Calu3 (cell line): ENCODE measurements at regions of chr17 and their contacts with region 1.

Region 1: GRCh38 chr17:57370037-57370581 is 113.8 kb downstream of the MSI2 start:
- DNase-seq: peak; percentile 17
- H3K4me3 Mint-ChIP-seq: no peak overlapping the region
- H3K27ac Mint-ChIP-seq: peak overlapping the region; percentile 88
- H3K4me1 Mint-ChIP-seq: peaks cover 48% of the 10 kb centered on the region
- H3K27me3 Mint-ChIP-seq: no peaks in the 10 kb centered on the region
- CTCF ChIP-seq: no peak

Region 2: GRCh38 chr17:56510554-56511342 is 859.4 kb before region 1 on chr17:
- CTCF ChIA-PET with region 1: no interaction called
- intact Hi-C with region 1: no loop called
- DNase-seq: no peak
- H3K4me3 Mint-ChIP-seq: no peak overlapping the region
- H3K27ac Mint-ChIP-seq: no peak overlapping the region
- H3K4me1 Mint-ChIP-seq: no peaks in the 10 kb centered on the region
- H3K27me3 Mint-ChIP-seq: peaks cover 23% of the 10 kb centered on the region
- CTCF ChIP-seq: no peak

Region 3: DNA sequence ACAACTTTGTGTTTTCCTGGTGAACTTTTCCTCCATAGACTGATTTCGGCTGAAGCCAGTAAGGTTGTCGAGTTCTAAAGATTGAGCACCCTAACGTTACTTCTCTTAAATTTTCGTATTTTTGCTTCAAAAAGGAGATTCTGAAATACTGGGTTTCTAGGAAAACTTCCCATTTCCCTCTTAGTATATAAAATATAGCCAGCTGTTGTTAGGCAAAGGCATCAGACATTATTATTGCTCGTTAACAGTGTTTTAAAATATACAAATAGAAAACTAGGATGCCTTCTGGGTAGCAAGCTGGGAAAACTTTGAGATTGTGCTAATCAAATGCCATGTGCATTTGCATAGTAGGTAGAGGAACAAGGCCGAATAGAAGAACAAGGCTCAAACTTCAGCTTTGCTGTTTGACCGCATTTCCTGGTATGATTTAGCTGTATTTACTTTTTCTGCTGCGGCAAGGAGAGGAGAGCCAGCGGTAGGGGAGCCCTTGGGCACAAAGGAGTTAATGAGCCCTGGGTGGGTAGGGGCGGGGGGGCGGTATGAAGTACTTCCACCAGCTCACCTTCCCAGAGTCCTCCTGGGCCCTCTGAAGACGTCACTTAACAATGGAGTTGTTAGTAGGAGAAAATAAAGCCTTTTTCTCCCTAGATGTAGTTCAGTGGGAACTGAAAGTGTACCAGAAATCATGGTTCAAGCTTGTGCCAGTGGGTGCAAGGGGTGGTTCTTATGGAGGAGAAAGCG is 38.1 kb after region 1 on chr17:
- CTCF ChIA-PET with region 1: interaction called, 3 read pairs
- intact Hi-C with region 1: loop called (anchors 5 kb)
- DNase-seq: peak; percentile 34
- H3K4me3 Mint-ChIP-seq: peak overlapping the region; percentile 51
- H3K27ac Mint-ChIP-seq: peak overlapping the region; percentile 97
- H3K4me1 Mint-ChIP-seq: peaks cover 38% of the 10 kb centered on the region
- H3K27me3 Mint-ChIP-seq: no peaks in the 10 kb centered on the region
- CTCF ChIP-seq: no peak